Common myeloid progenitor, CD34-positive (primary cell): ENCODE measurements at regions of chr15 and their contacts with region 1.

Region 1: GRCh38 chr15:91055548-91056331 is 33.3 kb upstream of the VPS33B start:
- DNase-seq: peak; percentile 37 to 45 (median 44)
- H3K4me3 ChIP-seq: no peak overlapping the region
- H3K27ac ChIP-seq: no peak overlapping the region
- H3K4me1 ChIP-seq: no peaks in the 10 kb centered on the region
- H3K27me3 ChIP-seq: peaks cover 0 to 41% (median 11%) of the 10 kb centered on the region in 5 experiments

Region 2: GRCh38 chr15:90970274-90970673 is 85.5 kb before region 1 on chr15:
- CTCF ChIA-PET with region 1: no interaction called
- POLR2A ChIA-PET with region 1: no interaction called
- DNase-seq: no peak
- H3K4me3 ChIP-seq: no peak overlapping the region
- H3K27ac ChIP-seq: no peak overlapping the region
- H3K4me1 ChIP-seq: no peaks in the 10 kb centered on the region
- H3K27me3 ChIP-seq: no peaks in the 10 kb centered on the region

Region 3: GRCh38 chr15:91224755-91225380 is 169.1 kb after region 1 on chr15:
- CTCF ChIA-PET with region 1: interaction called, 25 read pairs
- POLR2A ChIA-PET with region 1: no interaction called
- DNase-seq: peak; percentile 34 to 63 (median 49)
- H3K4me3 ChIP-seq: no peak overlapping the region
- H3K27ac ChIP-seq: no peak overlapping the region
- H3K4me1 ChIP-seq: no peaks in the 10 kb centered on the region
- H3K27me3 ChIP-seq: peaks cover 0 to 7% (median 2%) of the 10 kb centered on the region in 5 experiments

Region 4: GRCh38 chr15:91263996-91264531 is 208.3 kb after region 1 on chr15:
- CTCF ChIA-PET with region 1: interaction called, 24 read pairs
- POLR2A ChIA-PET with region 1: no interaction called
- DNase-seq: no peak
- H3K4me3 ChIP-seq: peak overlapping the region in 1 of 7 experiments; percentile 33
- H3K27ac ChIP-seq: no peak overlapping the region
- H3K4me1 ChIP-seq: peaks cover 3 to 51% (median 21%) of the 10 kb centered on the region in 4 experiments
- H3K27me3 ChIP-seq: no peaks in the 10 kb centered on the region